ENCODE measurements at regions of chr9 and their contacts with region 1.

Region 1: DNA sequence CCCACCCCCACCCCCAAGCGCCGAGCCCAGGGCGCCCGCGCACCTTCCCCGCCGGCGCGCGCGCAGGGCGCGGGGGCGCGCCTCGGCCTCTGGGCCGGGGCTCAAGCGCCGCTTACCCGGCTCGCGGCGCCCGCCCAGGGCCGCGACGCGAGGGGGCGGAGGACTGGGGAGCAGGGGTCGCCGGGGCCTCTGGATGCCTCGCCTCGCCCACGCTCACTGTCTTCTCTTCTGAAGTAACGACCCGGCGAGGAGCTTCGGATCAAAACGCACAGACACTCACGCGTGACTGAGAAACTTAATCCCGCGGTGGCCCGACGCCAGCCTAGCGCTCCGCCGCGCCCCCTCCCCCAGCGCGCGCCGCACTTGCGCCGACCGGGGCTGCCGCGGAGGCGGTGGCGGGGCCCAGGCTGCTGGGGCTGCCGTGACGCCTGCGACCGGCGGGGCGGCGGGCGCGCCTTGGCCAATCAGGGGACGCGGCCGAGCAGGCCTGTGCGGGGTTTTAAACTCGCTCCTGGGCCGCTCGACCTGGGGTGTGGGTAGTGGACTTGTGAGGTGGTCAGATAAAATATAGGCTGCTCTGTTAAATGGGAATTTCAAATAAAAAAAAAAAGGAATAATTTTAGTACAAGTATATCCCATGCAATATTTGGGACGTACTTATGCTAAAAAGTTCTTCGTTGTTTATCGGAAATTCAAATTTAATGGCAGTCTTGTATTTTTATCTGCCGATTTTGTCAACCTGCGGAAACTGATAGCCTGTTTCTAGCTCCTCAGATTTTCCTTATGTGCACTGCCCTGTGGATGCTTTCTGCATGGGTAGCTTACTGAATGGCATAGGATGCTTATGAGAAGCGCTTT is at the start of gene MPDZ:
- DNase-seq: peak; percentile 36 to 62
- ATAC-seq: peak; percentile 70 to 82
- H3K4me3 ChIP-seq: peak within 1 kb of the TSS; percentile 63 to 87 (median 84)
- H3K27ac ChIP-seq: peak within 1 kb of the TSS; percentile 90 to 96 (median 92)
- H3K4me1 ChIP-seq: peaks cover 16 to 17% of the 10 kb centered on the region in 2 donors
- H3K27me3 ChIP-seq: no peaks in the 10 kb centered on the region
- CTCF ChIP-seq: peak in 3 of 5 experiments; percentile 15 to 31 (median 20)
- POLR2A ChIP-seq: peak; percentile 59 to 66
- total RNA-seq, gene MPDZ: 17.9 to 29.6 (median 23.5) TPM

Region 2: GRCh38 chr9:13128224-13128860 is 151.2 kb before region 1 on chr9:
- in situ Hi-C with region 1: no loop called
- intact Hi-C with region 1: no loop called
- DNase-seq: no peak
- ATAC-seq: no peak
- H3K4me3 ChIP-seq: no peak overlapping the region
- H3K27ac ChIP-seq: no peak overlapping the region
- H3K4me1 ChIP-seq: no peaks in the 10 kb centered on the region
- H3K27me3 ChIP-seq: no peaks in the 10 kb centered on the region
- CTCF ChIP-seq: no peak
- POLR2A ChIP-seq: no peak

Region 3: DNA sequence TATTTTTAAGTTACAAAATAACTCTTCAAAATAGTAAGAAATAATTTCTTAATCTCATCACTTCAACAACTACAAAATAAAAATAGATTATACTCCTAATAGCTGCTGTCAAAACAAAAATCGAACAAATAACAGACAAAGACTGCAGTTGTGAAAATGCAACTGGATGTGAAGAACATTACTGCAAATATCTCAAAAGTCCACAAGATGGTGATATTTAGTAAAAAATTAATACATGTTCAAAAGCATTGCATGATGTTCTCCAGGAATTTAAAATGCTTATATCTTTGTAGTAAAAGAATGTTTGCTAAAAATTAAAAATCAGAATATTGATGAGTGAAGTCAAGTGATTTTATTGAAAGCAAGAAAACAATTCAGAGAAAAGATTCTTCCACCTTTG is 66.2 kb before region 1 on chr9:
- in situ Hi-C with region 1: no loop called
- intact Hi-C with region 1: loop called (anchors 10 kb)
- DNase-seq: no peak
- ATAC-seq: no peak
- H3K4me3 ChIP-seq: no peak overlapping the region
- H3K27ac ChIP-seq: no peak overlapping the region
- H3K4me1 ChIP-seq: peaks cover 0 to 7% of the 10 kb centered on the region in 2 donors
- H3K27me3 ChIP-seq: no peaks in the 10 kb centered on the region
- CTCF ChIP-seq: peak in 4 of 5 experiments; percentile 19 to 53 (median 31)
- POLR2A ChIP-seq: no peak